ENCODE measurements at regions of chr16 and their contacts with region 1.

Region 1: GRCh38 chr16:78478267-78478861 is 378.9 kb downstream of the WWOX start:
- DNase-seq: no peak

Region 2: GRCh38 chr16:80387318-80387921 is 1909.1 kb after region 1 on chr16:
- intact Hi-C with region 1: loop called (anchors 10 kb)
- DNase-seq: no peak

Measured in cardiac septum (tissue), 1 donor.